IMR-90 (cell line): ENCODE measurements at regions of chr1 and their contacts with region 1.

Region 1: DNA sequence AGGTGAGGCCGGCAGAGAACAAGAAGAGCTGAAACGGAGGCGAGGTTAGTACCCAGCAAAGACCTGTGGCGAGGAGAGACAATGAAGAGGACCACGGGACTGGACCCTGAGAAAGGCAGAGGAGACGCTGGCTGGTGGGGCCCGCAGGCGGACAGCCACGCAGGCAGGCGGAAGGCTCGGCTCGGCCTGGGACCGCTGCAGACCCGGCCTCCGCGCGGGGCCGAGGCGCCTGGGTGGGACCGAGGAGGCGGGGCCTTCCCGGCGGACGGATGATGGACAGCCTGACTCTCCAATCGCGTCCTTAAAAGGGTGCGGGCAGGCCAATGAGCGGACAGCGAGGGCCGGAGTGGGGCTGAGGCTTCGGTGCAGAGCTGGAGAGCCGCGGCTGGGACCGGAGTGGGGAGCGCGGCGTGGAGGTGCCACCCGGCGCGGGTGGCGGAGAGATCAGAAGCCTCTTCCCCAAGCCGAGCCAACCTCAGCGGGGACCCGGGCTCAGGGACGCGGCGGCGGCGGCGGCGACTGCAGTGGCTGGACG is at the start of gene MPZL1:
- DNase-seq: peak; percentile 92
- ATAC-seq: peak; percentile 96
- H3K4me3 ChIP-seq: peak within 1 kb of the TSS; percentile 89
- H3K27ac ChIP-seq: peak within 1 kb of the TSS; percentile 98
- H3K4me1 ChIP-seq: peaks cover 10% of the 10 kb centered on the region
- H3K27me3 ChIP-seq: no peaks in the 10 kb centered on the region
- CTCF ChIP-seq: no peak
- POLR2A ChIP-seq: peak; percentile 22
- RAD21 ChIP-seq: no peak
- total RNA-seq, gene MPZL1: 81.7 and 87.3 TPM in 2 replicates

Region 2: DNA sequence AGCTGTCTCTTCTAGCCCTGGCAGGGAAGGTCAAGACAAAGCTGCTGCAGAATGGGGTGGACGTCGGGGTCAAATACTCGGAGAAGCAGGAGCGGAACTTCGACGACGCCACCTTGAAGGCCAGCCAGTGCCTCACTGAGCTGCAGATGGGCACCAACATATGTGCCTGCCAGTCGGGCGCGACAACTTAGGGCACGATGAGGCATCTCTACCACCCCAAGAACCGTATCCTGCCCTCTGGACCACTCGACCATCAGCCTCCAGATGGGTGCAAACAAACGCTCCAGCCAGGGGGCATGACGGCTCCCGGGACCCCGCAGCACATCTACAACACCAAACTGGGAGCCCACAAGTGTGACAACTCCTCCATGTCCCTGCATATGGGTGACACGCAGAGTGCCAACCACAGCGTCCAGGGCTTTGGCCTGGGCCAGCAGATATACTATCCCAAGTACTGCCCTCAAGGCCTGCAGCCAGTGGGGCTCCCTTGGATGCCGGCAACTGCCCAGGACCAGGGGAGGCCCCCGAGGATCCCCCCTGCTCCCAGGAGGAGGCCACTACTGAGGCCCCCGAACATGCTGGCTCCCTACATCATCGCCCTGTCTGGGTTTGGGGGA is 925.0 kb before region 1 on chr1:
- CTCF ChIA-PET with region 1: no interaction called
- POLR2A ChIA-PET with region 1: no interaction called
- dilution Hi-C with region 1: no loop called
- in situ Hi-C with region 1: no loop called
- intact Hi-C with region 1: no loop called
- DNase-seq: no peak
- ATAC-seq: no peak
- H3K4me3 ChIP-seq: no peak overlapping the region
- H3K27ac ChIP-seq: no peak overlapping the region
- H3K4me1 ChIP-seq: no peaks in the 10 kb centered on the region
- H3K27me3 ChIP-seq: no peaks in the 10 kb centered on the region
- CTCF ChIP-seq: no peak
- POLR2A ChIP-seq: no peak
- RAD21 ChIP-seq: no peak

Region 3: DNA sequence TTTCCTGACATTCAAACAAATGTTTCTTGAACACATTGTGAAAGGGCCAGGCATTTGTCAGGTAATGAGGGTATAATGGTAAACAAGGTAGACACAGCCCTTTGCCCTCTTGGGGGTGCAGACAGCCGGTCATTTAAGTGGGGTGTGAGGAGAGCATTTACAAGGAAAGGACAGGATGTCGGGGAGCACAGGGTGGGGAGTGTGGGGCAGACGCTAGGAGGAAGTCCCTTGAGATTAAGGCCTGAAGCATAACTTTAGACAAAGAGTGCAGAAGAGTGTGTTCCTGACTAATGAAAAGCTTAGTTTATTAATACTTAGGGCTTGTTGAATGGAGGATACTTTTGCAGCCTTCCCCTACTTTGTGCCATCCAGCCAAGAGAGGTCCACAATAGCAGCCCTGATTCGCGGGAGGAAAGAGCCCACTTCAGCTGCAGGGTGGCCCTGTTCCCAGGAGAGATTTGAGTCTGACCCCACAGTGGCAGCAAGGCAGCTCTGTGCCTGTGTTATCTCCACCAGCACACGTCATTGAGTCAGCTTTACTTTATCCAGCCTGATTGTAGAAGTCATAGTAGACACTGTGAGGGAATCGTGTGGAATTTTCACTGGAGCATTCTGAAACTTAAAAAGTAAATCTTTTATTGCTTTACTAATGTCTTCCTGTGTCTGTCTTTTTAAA is 35.2 kb after region 1 on chr1:
- CTCF ChIA-PET with region 1: interaction called, 3 read pairs
- POLR2A ChIA-PET with region 1: no interaction called
- dilution Hi-C with region 1: no loop called
- in situ Hi-C with region 1: no loop called
- intact Hi-C with region 1: loop called (anchors 5 kb)
- DNase-seq: peak; percentile 63
- ATAC-seq: peak; percentile 50; the same call in 1 of the 2 replicates
- H3K4me3 ChIP-seq: no peak overlapping the region
- H3K27ac ChIP-seq: no peak overlapping the region
- H3K4me1 ChIP-seq: peaks cover 9% of the 10 kb centered on the region
- H3K27me3 ChIP-seq: no peaks in the 10 kb centered on the region
- CTCF ChIP-seq: no peak
- POLR2A ChIP-seq: no peak
- RAD21 ChIP-seq: no peak

Region 4: DNA sequence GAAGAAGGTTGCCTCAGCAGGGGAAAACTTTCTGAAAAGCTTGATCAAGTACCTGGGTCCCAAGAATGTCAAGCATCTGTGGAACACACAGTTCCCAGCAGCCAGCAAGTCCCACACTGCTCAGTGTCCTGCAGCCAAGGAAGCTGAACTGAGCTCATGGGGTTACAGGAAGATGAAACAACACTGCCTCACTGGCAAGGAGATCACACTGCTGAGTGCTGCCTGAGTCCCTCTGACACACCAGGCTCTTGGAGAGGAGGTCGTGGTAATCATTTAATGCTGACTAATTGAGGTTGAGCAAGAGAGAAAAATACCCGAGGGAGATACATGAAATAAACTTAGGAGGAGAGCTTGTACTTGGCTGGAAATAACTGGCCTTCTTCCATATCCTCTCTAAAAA is 75.3 kb after region 1 on chr1:
- CTCF ChIA-PET with region 1: interaction called, 4 read pairs
- POLR2A ChIA-PET with region 1: no interaction called
- dilution Hi-C with region 1: no loop called
- in situ Hi-C with region 1: loop called (anchors 5 kb)
- intact Hi-C with region 1: loop called (anchors 1 kb)
- DNase-seq: peak; percentile 99
- ATAC-seq: peak; percentile 92
- H3K4me3 ChIP-seq: no peak overlapping the region
- H3K27ac ChIP-seq: peak overlapping the region; percentile 18
- H3K4me1 ChIP-seq: peaks cover 16% of the 10 kb centered on the region
- H3K27me3 ChIP-seq: no peaks in the 10 kb centered on the region
- CTCF ChIP-seq: peak; percentile 22; the same call in 1 of the 2 replicates
- POLR2A ChIP-seq: peak; percentile 53; the same call in 1 of the 2 replicates
- RAD21 ChIP-seq: peak; percentile 50

Region 5: DNA sequence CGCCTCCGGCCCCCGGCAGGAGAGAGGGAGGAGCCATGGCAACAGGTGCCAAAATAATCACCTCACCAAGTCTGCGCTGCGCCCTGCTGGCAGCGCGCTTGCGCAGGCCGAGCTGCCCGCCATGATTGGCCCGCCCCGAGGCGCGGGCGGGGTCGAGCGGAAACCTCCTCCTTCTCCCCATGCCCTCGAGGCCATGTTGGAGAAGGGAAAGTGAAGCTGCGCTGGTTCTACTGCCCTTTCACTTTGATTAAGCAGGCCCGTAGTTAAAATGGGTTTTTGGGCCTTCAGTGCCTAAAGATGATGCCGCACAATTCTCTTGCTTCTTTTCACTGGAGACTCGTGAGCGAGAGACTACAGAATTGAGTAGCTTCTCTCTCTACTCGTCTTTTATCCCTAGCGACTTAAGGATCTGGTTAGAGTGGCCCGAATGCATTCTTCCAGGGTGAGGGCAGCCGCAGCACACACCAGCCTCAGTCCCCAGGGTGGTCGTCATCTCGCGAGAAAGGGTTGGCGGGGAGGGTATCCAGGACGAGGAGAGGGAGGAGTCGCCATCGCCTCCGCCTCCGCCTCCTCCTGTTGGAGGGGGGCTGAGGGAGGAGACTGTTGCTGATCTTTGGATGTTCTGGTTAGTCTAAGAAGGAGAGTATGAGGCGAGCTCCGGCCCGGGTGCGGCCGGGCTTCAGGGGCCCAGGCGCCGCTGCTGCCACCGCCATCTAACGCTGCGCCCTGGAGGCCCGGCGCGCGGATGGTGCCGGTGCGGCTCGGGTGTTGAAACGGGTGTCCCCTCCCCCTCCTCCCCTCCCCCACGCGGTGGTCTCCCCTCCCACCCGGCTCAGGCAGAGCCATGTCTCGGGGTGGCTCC is 214.6 kb after region 1 on chr1 and contains the start of gene DCAF6:
- CTCF ChIA-PET with region 1: no interaction called
- POLR2A ChIA-PET with region 1: no interaction called
- dilution Hi-C with region 1: no loop called
- in situ Hi-C with region 1: no loop called
- intact Hi-C with region 1: loop called (anchors 1 kb)
- DNase-seq: peak; percentile 99
- ATAC-seq: peak; percentile 88
- H3K4me3 ChIP-seq: peak within 1 kb of the TSS; percentile 98
- H3K27ac ChIP-seq: peak within 1 kb of the TSS; percentile 89
- H3K4me1 ChIP-seq: no peaks in the 10 kb centered on the region
- H3K27me3 ChIP-seq: no peaks in the 10 kb centered on the region
- CTCF ChIP-seq: no peak
- POLR2A ChIP-seq: peak; percentile 88
- RAD21 ChIP-seq: no peak
- total RNA-seq, gene DCAF6: 74.7 and 88.7 TPM in 2 replicates

Region 6: DNA sequence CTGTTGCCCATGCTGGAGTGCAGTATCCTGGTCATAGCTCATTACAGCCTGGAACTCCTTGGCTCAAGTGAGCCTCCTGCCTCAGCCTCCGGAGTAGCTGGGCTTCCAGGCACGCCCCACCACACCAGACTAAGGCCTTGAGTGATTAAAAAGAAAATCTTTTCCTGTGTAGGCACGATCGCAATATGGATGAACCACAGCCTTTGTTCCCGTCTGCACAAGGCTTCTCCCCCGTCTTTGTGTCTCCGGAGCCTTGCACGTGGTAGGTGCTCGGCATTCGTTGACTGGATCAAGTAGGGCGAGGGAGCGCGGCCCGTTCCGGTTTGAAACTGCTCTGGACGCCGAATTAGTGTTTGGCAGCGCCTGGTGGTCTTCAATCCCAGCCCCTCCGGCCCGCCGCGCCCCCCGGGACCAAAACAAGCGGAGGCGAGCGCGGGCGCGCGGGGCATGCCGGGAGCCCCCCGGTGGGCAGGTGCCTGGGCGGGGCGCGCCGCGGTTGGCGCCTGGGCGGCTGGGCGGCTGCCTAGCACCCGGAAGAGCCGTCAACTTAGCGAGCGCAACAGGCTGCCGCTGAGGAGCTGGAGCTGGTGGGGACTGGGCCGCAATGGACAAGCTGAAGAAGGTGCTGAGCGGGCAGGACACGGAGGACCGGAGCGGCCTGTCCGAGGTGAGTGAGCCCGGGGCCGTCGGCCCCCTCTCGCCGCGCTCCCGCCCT is 503.9 kb after region 1 on chr1 and contains the start of gene SFT2D2:
- CTCF ChIA-PET with region 1: no interaction called
- POLR2A ChIA-PET with region 1: no interaction called
- dilution Hi-C with region 1: no loop called
- in situ Hi-C with region 1: no loop called
- intact Hi-C with region 1: loop called (anchors 2 kb)
- DNase-seq: peak; percentile 67
- ATAC-seq: peak; percentile 95
- H3K4me3 ChIP-seq: peak within 1 kb of the TSS; percentile 85
- H3K27ac ChIP-seq: peak within 1 kb of the TSS; percentile 86
- H3K4me1 ChIP-seq: peaks cover 3% of the 10 kb centered on the region
- H3K27me3 ChIP-seq: no peaks in the 10 kb centered on the region; the same call in 1 of the 2 replicates
- CTCF ChIP-seq: no peak
- POLR2A ChIP-seq: peak; percentile 9; the same call in 1 of the 2 replicates
- RAD21 ChIP-seq: no peak
- total RNA-seq, gene SFT2D2: 37.6 and 42.2 TPM in 2 replicates